ENCODE measurements at regions of chr13 and their contacts with region 1.

Region 1: GRCh38 chr13:52128714-52129700 is at the start of gene NEK5:
- DNase-seq: peak; percentile 75 to 89
- ATAC-seq: peak; percentile 91
- H3K4me3 ChIP-seq: peak within 1 kb of the TSS; percentile 49 to 61
- H3K27ac ChIP-seq: no peak within 1 kb of the TSS
- H3K4me1 ChIP-seq: no peaks in the 10 kb centered on the region
- H3K27me3 ChIP-seq: no peaks in the 10 kb centered on the region
- total RNA-seq, gene NEK5: 0.58 to 1.4 TPM

Region 2: GRCh38 chr13:51814825-51815650 is 314.0 kb before region 1 on chr13:
- intact Hi-C with region 1: loop called (anchors 5 kb)
- DNase-seq: peak in 1 of 2 donors; percentile 68
- ATAC-seq: peak; percentile 78
- H3K4me3 ChIP-seq: no peak overlapping the region
- H3K27ac ChIP-seq: no peak overlapping the region
- H3K4me1 ChIP-seq: no peaks in the 10 kb centered on the region
- H3K27me3 ChIP-seq: no peaks in the 10 kb centered on the region

Region 3: GRCh38 chr13:51844862-51845573 is 284.0 kb before region 1 on chr13 and contains the start of gene TMEM272:
- intact Hi-C with region 1: loop called in 1 of 2 experiments (anchors 10 kb)
- DNase-seq: peak; percentile 64 to 83
- ATAC-seq: peak; percentile 70
- H3K4me3 ChIP-seq: no peak within 1 kb of the TSS
- H3K27ac ChIP-seq: no peak within 1 kb of the TSS
- H3K4me1 ChIP-seq: peaks cover 0 to 2% of the 10 kb centered on the region in 2 donors
- H3K27me3 ChIP-seq: no peaks in the 10 kb centered on the region
- total RNA-seq, gene TMEM272: 0.16 to 0.57 TPM

Region 4: DNA sequence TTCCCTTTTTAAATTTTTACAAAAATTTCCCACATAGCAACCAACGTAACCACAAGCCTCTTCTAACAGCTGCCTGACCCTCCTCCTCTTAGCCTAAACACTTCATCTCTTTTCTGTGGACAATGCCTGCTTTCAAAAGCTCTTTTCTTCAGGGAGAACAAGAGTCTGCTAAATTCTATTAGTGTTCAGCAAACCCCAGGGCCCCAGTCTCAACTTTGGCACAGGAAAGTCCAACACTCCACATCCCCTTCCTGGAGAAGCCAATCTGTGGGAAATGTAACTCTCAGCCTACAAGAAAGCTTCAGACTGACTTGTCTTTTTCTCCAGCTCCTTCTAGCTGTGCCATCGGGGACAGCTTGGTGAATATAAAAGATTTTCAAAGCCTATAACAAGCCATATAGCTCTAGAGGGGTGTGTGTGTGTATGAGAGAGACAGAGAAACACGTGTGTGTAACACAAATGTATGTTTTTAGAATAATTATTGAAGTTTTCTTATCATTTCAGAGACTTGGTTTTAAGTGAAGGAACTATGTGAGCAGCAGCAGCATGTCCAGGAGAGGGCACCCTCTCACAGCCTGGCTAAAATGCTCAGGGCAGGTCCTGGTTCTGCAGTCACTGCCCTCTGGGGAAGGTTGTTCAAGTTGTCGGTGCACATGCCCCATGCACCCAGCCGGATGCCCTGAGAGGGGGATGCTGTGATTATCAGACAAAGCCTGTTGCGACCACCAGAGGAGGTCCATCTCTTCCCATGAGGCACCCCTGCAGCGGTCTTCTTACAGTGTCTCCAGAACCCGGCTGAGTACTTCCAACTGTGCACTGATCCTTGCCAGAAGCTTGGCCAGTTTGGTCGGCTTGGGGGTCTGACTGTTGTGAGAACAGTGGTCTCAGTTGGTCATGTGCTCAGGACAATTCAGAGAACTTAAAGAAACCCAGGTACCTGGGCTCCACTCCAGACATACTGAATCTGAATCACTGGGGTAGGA is 232.8 kb before region 1 on chr13:
- intact Hi-C with region 1: loop called in 1 of 2 experiments (anchors 2 kb)
- DNase-seq: peak in 1 of 2 donors; percentile 59
- ATAC-seq: no peak
- H3K4me3 ChIP-seq: no peak overlapping the region
- H3K27ac ChIP-seq: no peak overlapping the region
- H3K4me1 ChIP-seq: no peaks in the 10 kb centered on the region
- H3K27me3 ChIP-seq: no peaks in the 10 kb centered on the region

Region 5: DNA sequence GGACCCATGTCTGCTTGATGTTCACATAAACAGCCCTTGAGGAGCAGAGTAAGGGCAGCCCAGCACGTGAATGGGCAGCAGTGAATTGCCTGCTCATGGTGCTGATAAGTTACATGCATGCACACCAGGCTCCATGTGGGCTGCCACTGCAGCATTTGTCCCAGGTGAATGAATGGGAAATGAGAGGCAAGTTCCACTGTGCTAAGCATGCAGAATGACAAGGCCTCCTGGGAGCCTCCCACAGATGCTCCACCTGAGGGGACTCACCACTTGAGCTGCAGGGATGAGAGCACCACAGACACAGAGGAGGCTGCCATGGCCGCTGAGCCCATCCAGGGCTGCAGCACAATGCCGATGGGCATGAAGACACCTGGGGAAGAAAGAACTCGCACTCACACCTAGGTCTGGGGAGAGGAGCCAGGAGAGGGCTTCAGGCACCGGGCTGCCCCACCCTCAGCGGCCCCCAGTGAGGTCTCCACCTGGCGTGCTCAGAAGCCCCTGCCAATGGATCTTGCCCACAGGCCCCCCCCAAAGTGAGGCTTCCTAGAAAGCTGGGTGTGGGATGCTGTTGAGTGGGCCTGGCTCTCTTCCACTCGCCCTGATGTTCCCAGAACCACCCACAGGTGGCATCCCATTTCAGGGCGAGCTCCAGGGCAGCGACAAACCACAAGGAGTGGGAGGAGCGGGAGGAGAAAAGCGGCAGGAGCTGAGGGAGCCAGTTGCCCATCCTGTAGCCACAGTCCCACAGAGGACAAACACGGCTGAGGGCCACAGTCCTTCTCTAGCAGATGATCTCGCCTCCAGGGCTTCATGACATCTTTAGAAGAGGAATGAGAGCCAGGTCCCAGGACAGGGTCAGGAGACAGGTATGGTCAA is 193.4 kb before region 1 on chr13:
- intact Hi-C with region 1: loop called in 1 of 2 experiments (anchors 10 kb)
- DNase-seq: no peak
- ATAC-seq: no peak
- H3K4me3 ChIP-seq: no peak overlapping the region
- H3K27ac ChIP-seq: no peak overlapping the region
- H3K4me1 ChIP-seq: no peaks in the 10 kb centered on the region
- H3K27me3 ChIP-seq: no peaks in the 10 kb centered on the region

Region 6: DNA sequence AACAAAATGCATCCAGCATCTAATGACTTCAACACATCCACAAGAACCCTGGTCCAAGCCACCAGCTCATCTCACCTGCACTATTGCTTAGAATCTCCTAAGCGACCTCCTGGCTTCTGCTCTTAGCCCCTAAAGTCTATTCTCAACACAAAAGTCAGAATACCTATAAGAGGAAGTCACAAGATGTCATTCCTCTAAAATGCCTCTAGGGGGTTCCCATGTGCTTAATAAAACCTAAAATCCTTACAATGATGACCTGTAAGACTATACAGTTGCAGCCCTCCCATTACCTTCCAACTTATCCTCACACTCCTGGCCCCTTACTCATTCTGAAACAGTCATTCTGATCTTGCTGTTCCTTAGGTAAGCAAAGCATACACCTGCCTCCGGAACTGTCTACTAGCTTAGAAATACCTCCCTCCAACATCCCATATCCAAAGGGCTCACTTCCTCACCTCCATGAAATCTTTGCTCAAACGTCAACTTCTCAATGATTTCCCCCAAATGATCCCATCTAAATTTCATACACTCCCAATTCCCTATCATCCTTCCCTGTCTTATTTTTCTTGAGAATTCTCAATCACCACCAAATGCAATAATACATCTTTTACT is 127.8 kb before region 1 on chr13:
- intact Hi-C with region 1: loop called (anchors 2 to 5 kb)
- DNase-seq: no peak
- ATAC-seq: peak; percentile 54
- H3K4me3 ChIP-seq: no peak overlapping the region
- H3K27ac ChIP-seq: no peak overlapping the region
- H3K4me1 ChIP-seq: no peaks in the 10 kb centered on the region
- H3K27me3 ChIP-seq: no peaks in the 10 kb centered on the region

Region 7: GRCh38 chr13:52061587-52061986 is 67.4 kb before region 1 on chr13:
- intact Hi-C with region 1: loop called in 1 of 2 experiments (anchors 10 kb)
- DNase-seq: no peak
- ATAC-seq: no peak
- H3K4me3 ChIP-seq: no peak overlapping the region
- H3K27ac ChIP-seq: no peak overlapping the region
- H3K4me1 ChIP-seq: no peaks in the 10 kb centered on the region
- H3K27me3 ChIP-seq: no peaks in the 10 kb centered on the region

Measured in aorta (tissue), 5 donors.